Activated CD8-positive, alpha-beta memory T cell treated with anti-CD3 and anti-CD28 coated beads, Interleukin-2, amount 10 ng/mL, durations not matched to agents 7 days and 5 days (primary cell): ENCODE measurements at regions of chr10 and their contacts with region 1.

Region 1: GRCh38 chr10:93482145-93482834 is at the start of gene MYOF:
- DNase-seq: peak; percentile 71
- ATAC-seq: peak; percentile 83
- H3K4me3 Mint-ChIP-seq: peak within 1 kb of the TSS; percentile 81
- H3K27ac Mint-ChIP-seq: peak within 1 kb of the TSS; percentile 83
- H3K4me1 Mint-ChIP-seq: peaks cover 18% of the 10 kb centered on the region
- H3K27me3 Mint-ChIP-seq: peaks cover 25% of the 10 kb centered on the region
- total RNA-seq, gene MYOF: 5.5 to 6.6 TPM

Region 2: DNA sequence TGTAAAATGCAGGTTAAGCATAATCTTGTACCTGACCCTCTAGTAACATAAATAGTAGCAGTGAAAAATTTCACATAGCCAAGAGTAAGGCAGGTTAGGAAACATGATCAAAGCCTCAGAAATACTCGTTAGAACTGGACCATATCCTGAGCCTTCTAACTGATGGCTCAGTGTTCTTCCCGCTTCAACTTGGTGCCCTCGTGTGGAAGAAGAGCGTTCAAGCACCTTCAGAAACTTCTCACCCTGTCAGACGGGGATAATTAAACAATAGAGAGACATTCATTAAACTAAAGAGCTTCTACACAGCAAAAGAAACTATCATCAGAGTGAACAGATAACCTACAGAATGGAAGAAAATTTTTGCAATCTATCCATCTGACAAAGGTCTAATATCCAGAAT is 124.6 kb before region 1 on chr10:
- CTCF ChIA-PET with region 1: interaction called, 22 read pairs
- DNase-seq: no peak
- ATAC-seq: peak; percentile 55
- H3K4me3 Mint-ChIP-seq: no peak overlapping the region
- H3K27ac Mint-ChIP-seq: no peak overlapping the region
- H3K4me1 Mint-ChIP-seq: peaks cover 6% of the 10 kb centered on the region
- H3K27me3 Mint-ChIP-seq: no peaks in the 10 kb centered on the region

Region 3: DNA sequence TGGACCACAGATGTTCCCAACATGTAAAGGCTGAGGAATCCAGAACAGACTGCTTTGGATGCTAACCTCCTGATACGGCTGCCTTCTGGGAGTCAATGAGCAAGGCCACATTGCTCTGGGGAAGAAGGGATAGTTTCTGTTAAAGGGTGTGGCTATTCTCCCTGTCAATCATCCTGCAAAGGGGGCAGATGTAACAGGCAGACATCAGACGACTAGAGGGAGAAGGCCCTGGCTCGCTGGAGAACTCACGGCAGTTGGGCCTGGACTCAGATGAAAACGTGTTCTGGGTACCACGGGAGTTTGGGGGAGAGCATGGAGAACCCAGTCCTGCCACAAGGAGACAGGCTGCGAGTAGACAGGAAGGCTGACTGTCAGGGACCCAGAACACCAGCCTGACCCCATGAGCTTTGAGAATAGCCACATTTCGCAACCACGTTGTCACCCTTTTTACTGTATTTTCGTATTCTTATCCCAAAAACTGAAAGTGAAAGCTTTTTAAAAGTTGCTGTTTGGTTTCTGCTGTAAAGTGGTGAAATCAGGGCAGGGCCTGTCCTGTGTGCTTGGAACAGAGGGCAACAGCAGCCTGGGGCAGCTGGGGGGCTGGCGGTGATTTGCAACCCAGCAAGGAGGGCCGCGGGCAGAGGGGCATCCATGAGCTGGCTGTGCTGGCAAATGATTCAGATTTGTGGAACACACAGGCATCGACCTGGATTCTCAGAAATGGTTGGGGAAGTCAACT is 95.5 kb before region 1 on chr10:
- CTCF ChIA-PET with region 1: interaction called, 365 read pairs
- DNase-seq: peak; percentile 59
- ATAC-seq: peak; percentile 83
- H3K4me3 Mint-ChIP-seq: peak overlapping the region; percentile 65
- H3K27ac Mint-ChIP-seq: peak overlapping the region; percentile 88
- H3K4me1 Mint-ChIP-seq: peaks cover 26% of the 10 kb centered on the region
- H3K27me3 Mint-ChIP-seq: peaks cover 2% of the 10 kb centered on the region

Region 4: DNA sequence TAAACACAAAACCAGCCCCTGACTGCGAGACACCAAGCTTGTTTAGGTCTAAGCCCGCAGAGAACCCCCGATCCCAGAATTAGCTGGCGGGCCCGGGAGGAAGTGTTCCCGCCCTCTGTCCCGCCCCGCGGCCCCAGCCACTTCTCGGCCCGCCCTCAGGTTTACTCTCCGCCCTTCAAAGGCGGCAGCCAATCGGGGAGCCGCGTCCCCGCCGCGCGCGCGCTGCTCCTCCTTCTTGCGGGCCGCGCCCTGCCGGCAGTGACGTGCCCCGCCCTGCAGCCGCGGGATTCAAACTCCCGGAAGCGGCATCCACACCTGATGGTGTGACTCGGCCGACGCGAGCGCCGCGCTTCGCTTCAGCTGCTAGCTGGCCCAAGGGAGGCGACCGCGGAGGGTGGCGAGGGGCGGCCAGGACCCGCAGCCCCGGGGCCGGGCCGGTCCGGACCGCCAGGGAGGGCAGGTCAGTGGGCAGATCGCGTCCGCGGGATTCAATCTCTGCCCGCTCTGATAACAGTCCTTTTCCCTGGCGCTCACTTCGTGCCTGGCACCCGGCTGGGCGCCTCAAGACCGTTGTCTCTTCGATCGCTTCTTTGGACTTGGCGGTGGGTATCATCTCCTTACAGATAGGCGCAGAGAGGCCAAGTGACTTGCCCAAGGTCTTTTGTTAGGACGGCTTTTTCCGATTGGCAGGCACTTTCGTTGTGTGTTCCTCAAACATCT is 14.2 kb after region 1 on chr10 and contains the start of gene CEP55:
- CTCF ChIA-PET with region 1: interaction called, 35 read pairs
- DNase-seq: peak; percentile 97
- ATAC-seq: peak; percentile 99
- H3K4me3 Mint-ChIP-seq: peak within 1 kb of the TSS; percentile 96
- H3K27ac Mint-ChIP-seq: peak within 1 kb of the TSS; percentile 96
- H3K4me1 Mint-ChIP-seq: peaks cover 37% of the 10 kb centered on the region
- H3K27me3 Mint-ChIP-seq: no peaks in the 10 kb centered on the region
- total RNA-seq, gene CEP55: 75.6 to 79.3 TPM

Region 5: DNA sequence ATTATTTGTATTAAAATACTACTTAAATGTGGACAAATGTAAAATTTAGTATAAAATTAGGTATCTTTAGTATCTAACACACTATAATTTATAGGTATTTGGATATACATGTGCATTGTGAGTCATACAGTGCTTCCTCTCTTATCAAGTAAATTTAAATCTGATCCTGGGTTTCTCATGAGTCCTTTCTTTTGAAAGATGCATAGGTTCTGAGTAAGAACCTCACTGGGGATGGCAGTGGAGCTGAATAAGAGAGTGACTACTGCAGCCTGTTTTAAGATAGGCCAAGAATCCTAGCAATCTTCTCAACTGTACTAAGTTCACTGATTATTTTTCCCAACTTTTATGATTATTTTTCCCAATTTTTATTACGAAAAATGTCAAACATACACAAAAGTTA is 30.3 kb after region 1 on chr10:
- CTCF ChIA-PET with region 1: interaction called, 49 read pairs
- DNase-seq: no peak
- ATAC-seq: no peak
- H3K4me3 Mint-ChIP-seq: no peak overlapping the region
- H3K27ac Mint-ChIP-seq: no peak overlapping the region
- H3K4me1 Mint-ChIP-seq: peaks cover 24% of the 10 kb centered on the region
- H3K27me3 Mint-ChIP-seq: no peaks in the 10 kb centered on the region